Mammary epithelial cell (primary cell): ENCODE measurements at regions of chr17 and their contacts with region 1.

Region 1: DNA sequence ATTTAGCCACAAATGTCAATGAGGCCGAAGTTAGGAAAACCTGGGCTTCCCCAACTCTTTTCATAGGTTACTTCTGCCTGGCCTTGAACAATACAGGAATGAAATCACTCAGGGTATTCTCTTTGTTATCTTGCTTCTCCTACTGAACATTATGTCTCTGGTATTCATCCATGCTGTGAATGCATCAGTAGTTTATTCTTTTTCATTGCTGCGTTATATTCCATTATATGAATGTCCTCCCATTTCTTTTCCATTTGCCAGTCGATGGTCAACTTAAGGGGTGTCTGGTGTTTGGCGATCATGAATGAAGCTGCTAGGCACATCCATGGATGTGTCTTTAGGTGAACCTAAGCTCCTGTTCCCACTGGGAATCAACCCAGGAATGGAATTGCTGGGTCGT is 128.3 kb downstream of the CRLF3 start:
- DNase-seq: no peak
- H3K4me3 ChIP-seq: no peak overlapping the region
- H3K27ac ChIP-seq: no peak overlapping the region
- H3K4me1 ChIP-seq: no peaks in the 10 kb centered on the region
- H3K27me3 ChIP-seq: no peaks in the 10 kb centered on the region
- CTCF ChIP-seq: no peak

Region 2: DNA sequence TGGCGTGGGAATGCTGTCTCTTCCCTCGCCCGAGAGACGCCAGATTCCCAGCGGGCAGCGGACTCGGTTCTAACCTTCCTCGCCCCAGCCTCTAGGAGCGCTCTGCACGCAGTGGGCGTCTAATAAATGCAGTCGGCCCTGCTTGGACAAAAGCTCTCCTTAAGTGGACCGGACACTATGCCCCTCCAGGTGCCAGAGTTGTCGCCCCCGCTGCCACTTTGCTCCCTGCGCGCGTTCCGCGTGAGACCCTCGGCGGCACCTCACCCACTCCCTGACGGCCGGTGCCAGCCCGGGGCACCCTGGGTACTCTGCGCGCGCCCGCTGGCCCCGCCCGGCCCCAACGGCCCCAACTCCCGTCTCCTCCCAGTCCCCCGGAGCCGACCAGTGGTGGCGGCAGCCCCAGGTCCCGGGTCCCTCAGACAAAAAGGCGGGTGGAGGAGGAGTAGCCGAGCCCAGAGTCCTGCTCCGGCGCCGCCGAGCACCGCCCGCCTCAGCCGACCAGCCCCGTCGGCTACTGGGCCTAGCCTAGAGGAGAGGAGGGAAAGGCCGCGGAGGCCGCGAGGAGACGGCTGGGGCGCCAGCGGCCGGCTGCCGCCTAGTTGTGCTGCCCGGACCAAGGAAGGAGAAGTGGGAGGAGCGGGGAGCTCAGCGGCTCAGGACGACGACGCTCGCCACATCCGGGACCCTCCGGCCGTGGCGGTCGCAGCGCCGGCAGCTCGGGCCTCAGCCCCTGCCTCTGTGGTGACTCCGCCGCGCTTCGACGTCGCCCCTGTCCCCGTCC is 96.0 kb before region 1 on chr17:
- CTCF ChIA-PET with region 1: no interaction called
- dilution Hi-C with region 1: no loop called
- in situ Hi-C with region 1: no loop called
- intact Hi-C with region 1: loop called (anchors 10 kb)
- DNase-seq: peak; percentile 86
- H3K4me3 ChIP-seq: peak overlapping the region; percentile 75 to 96 (median 90)
- H3K27ac ChIP-seq: peak overlapping the region; percentile 57
- H3K4me1 ChIP-seq: no peaks in the 10 kb centered on the region
- H3K27me3 ChIP-seq: no peaks in the 10 kb centered on the region
- CTCF ChIP-seq: peak; percentile 42 to 71